Common myeloid progenitor, CD34-positive (primary cell): ENCODE measurements at regions of chr16 and their contacts with region 1.

Region 1: DNA sequence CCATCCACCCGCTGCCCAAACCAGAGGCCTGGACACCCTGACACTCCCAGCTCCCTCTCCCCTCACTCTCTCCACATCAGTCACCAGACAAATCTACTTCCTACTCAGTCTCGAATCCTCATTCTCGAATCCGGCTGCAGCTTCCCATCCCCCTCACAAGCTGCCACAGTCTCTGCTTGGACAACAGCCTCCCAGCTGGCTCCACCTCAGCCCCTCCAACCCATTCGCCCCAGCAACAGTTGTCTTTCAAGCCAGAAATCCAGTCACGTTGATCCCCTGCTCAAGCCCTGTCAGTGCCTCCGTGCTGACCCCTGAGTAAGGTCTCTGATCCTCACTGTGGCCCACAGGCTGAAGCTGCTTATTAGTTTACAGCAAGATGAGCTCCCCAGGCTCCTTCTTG is 44.2 kb upstream of the MTSS2 start:
- DNase-seq: no peak
- H3K4me3 ChIP-seq: no peak overlapping the region
- H3K27ac ChIP-seq: no peak overlapping the region
- H3K4me1 ChIP-seq: peaks cover 0 to 12% (median 10%) of the 10 kb centered on the region in 4 experiments
- H3K27me3 ChIP-seq: no peaks in the 10 kb centered on the region

Region 2: GRCh38 chr16:70407811-70408274 is 322.2 kb before region 1 on chr16:
- CTCF ChIA-PET with region 1: no interaction called
- POLR2A ChIA-PET with region 1: no interaction called
- DNase-seq: no peak
- H3K4me3 ChIP-seq: no peak overlapping the region
- H3K27ac ChIP-seq: no peak overlapping the region
- H3K4me1 ChIP-seq: peaks cover 5 to 51% (median 32%) of the 10 kb centered on the region in 4 experiments
- H3K27me3 ChIP-seq: no peaks in the 10 kb centered on the region

Region 3: GRCh38 chr16:70695331-70696070 is 34.5 kb before region 1 on chr16:
- CTCF ChIA-PET with region 1: interaction called, 11 read pairs
- POLR2A ChIA-PET with region 1: no interaction called
- DNase-seq: peak; percentile 72 to 95 (median 89)
- H3K4me3 ChIP-seq: peak overlapping the region in 4 of 7 experiments; percentile 15 to 49 (median 44)
- H3K27ac ChIP-seq: peak overlapping the region; percentile 14 to 73
- H3K4me1 ChIP-seq: peaks cover 0 to 67% (median 56%) of the 10 kb centered on the region in 4 experiments
- H3K27me3 ChIP-seq: no peaks in the 10 kb centered on the region

Region 4: GRCh38 chr16:70715055-70715858 is 14.8 kb before region 1 on chr16:
- CTCF ChIA-PET with region 1: interaction called, 11 read pairs
- POLR2A ChIA-PET with region 1: no interaction called
- DNase-seq: peak in 1 of 3 donors; percentile 45
- H3K4me3 ChIP-seq: no peak overlapping the region
- H3K27ac ChIP-seq: no peak overlapping the region
- H3K4me1 ChIP-seq: peaks cover 0 to 21% (median 10%) of the 10 kb centered on the region in 4 experiments
- H3K27me3 ChIP-seq: no peaks in the 10 kb centered on the region